MCF 10A (cell line): ENCODE measurements at regions of chr3 and their contacts with region 1.

Region 1: GRCh38 chr3:12862387-12862786 is 21.0 kb upstream of the RPL32 start:
- DNase-seq: no peak
- H3K4me3 Mint-ChIP-seq: no peak overlapping the region
- H3K27ac Mint-ChIP-seq: no peak overlapping the region
- H3K4me1 Mint-ChIP-seq: no peaks in the 10 kb centered on the region
- H3K27me3 Mint-ChIP-seq: peaks cover 13% of the 10 kb centered on the region
- CTCF ChIP-seq: no peak

Region 2: GRCh38 chr3:12440927-12441326 is 421.5 kb before region 1 on chr3:
- CTCF ChIA-PET with region 1: no interaction called
- POLR2A ChIA-PET with region 1: no interaction called
- intact Hi-C with region 1: no loop called
- DNase-seq: no peak
- H3K4me3 Mint-ChIP-seq: no peak overlapping the region
- H3K27ac Mint-ChIP-seq: no peak overlapping the region
- H3K4me1 Mint-ChIP-seq: peaks cover 22% of the 10 kb centered on the region
- H3K27me3 Mint-ChIP-seq: no peaks in the 10 kb centered on the region
- CTCF ChIP-seq: no peak

Region 3: GRCh38 chr3:12891985-12892839 is 29.8 kb after region 1 on chr3:
- CTCF ChIA-PET with region 1: interaction called, 27 read pairs
- POLR2A ChIA-PET with region 1: interaction called, 3 read pairs
- intact Hi-C with region 1: no loop called
- DNase-seq: peak; percentile 65
- H3K4me3 Mint-ChIP-seq: no peak overlapping the region
- H3K27ac Mint-ChIP-seq: no peak overlapping the region
- H3K4me1 Mint-ChIP-seq: peaks cover 11% of the 10 kb centered on the region
- H3K27me3 Mint-ChIP-seq: peaks cover 31% of the 10 kb centered on the region
- CTCF ChIP-seq: peak; percentile 84